Gastrocnemius medialis (tissue), 4 donors: ENCODE measurements at regions of chr9 and their contacts with region 1.

Region 1: GRCh38 chr9:92501671-92502393 is 19.5 kb upstream of the ASPN start:
- DNase-seq: peak; percentile 33 to 69
- ATAC-seq: peak; percentile 83 to 91
- H3K4me3 ChIP-seq: no peak overlapping the region
- H3K27ac ChIP-seq: peak overlapping the region; percentile 29 to 52 (median 34)
- H3K4me1 ChIP-seq: peaks cover 6 to 7% of the 10 kb centered on the region in 2 donors
- H3K27me3 ChIP-seq: no peaks in the 10 kb centered on the region
- CTCF ChIP-seq: peak in 2 of 5 experiments; percentile 20 to 37
- POLR2A ChIP-seq: no peak

Region 2: GRCh38 chr9:92607773-92608172 is 105.9 kb after region 1 on chr9:
- in situ Hi-C with region 1: loop called in 1 of 4 experiments (anchors 25 kb)
- intact Hi-C with region 1: no loop called
- DNase-seq: no peak
- ATAC-seq: no peak
- H3K4me3 ChIP-seq: no peak overlapping the region
- H3K27ac ChIP-seq: peak overlapping the region in 3 of 4 donors; percentile 11 to 74 (median 51)
- H3K4me1 ChIP-seq: peaks cover 13 to 26% of the 10 kb centered on the region in 2 donors
- H3K27me3 ChIP-seq: no peaks in the 10 kb centered on the region
- CTCF ChIP-seq: no peak
- POLR2A ChIP-seq: no peak